Endothelial cell of umbilical vein (primary cell): ENCODE measurements at regions of chr10 and their contacts with region 1.

Region 1: DNA sequence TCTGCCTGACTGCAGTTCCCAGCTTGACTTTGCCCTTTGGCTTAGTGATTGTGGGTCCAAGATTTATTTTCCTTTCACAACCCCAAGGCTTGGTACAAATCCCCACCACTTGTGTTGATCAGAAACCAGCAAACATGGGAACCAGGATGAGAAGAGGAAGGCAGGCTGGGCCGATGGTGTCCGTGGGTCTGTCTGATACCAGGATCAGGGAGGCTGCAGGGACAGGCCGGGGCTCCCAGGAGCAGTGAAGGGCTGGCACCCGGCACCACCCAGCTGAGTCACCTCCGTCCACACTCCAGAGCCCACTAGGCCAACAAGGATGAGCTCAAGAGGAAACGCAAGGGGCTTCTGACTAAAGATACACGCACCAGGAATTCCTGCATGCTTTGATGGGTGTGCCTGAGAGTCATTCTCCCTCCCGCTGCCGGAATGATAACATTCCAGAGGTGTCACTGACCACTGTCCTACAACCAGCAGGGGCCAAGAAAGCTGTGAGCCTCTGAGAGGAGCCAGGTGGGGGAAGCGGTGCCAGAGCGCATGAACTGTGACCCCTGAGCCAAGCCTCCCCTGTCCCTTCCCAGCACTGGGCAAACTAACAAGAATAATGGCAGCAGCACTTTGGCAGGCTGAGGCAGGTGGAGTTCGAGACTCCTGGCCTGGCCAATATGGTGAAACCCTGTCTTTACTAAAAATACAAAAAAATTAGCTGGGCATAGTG is 29.2 kb upstream of the PROSER2 start:
- DNase-seq: no peak
- H3K4me3 ChIP-seq: no peak overlapping the region
- H3K27ac ChIP-seq: no peak overlapping the region
- H3K4me1 ChIP-seq: peaks cover 15% of the 10 kb centered on the region
- H3K27me3 ChIP-seq: peaks cover 0 to 4% of the 10 kb centered on the region in 2 experiments
- CTCF ChIP-seq: no peak
- POLR2A ChIP-seq: no peak

Region 2: DNA sequence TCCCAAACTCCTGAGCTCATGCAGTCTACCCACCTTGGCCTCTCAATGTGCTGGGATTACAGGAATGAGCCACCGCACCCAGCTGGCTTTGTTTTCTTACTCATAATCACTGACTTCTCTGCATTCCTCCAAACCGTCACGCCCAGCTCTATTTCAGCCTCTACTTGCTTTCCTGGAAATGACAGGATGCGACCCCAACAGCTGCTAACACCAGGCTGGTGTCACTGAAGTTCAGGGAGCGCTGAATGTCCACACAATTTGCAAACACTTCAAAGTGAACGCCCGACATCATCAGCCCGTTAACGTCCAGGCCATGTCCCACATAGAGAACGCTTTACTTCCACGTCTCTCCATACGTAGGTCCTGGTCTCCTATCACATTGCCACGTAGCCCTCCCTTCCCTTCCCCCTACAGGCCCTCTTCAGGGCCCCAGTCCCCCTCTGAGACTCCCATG is 16.4 kb after region 1 on chr10:
- CTCF ChIA-PET with region 1: interaction called, 42 read pairs
- POLR2A ChIA-PET with region 1: interaction called, 12 read pairs
- dilution Hi-C with region 1: no loop called
- intact Hi-C with region 1: loop called (anchors 1 kb)
- DNase-seq: peak; percentile 15
- H3K4me3 ChIP-seq: no peak overlapping the region
- H3K27ac ChIP-seq: no peak overlapping the region
- H3K4me1 ChIP-seq: peaks cover 20% of the 10 kb centered on the region
- H3K27me3 ChIP-seq: no peaks in the 10 kb centered on the region
- CTCF ChIP-seq: no peak
- POLR2A ChIP-seq: no peak

Region 3: GRCh38 chr10:11921800-11922392 is 128.0 kb after region 1 on chr10:
- CTCF ChIA-PET with region 1: no interaction called
- POLR2A ChIA-PET with region 1: no interaction called
- dilution Hi-C with region 1: no loop called
- intact Hi-C with region 1: loop called (anchors 5 kb)
- DNase-seq: peak; percentile 50
- H3K4me3 ChIP-seq: no peak overlapping the region
- H3K27ac ChIP-seq: no peak overlapping the region
- H3K4me1 ChIP-seq: peaks cover 7% of the 10 kb centered on the region
- H3K27me3 ChIP-seq: no peaks in the 10 kb centered on the region
- CTCF ChIP-seq: no peak
- POLR2A ChIP-seq: no peak